GM12878 (cell line): ENCODE measurements at regions of chr5 and their contacts with region 1.

Region 1: GRCh38 chr5:162990856-162991497 is 446.4 kb upstream of the CCNG1 start:
- DNase-seq: peak; percentile 46
- ATAC-seq: peak; percentile 88
- H3K4me3 ChIP-seq: no peak overlapping the region
- H3K27ac ChIP-seq: no peak overlapping the region
- H3K4me1 ChIP-seq: no peaks in the 10 kb centered on the region
- H3K27me3 ChIP-seq: no peaks in the 10 kb centered on the region
- CTCF ChIP-seq: no peak
- EP300 ChIP-seq: peak in 1 of 2 experiments; percentile 76; a peak in 3 of 4 replicates
- POLR2A ChIP-seq: no peak
- RAD21 ChIP-seq: no peak

Region 2: DNA sequence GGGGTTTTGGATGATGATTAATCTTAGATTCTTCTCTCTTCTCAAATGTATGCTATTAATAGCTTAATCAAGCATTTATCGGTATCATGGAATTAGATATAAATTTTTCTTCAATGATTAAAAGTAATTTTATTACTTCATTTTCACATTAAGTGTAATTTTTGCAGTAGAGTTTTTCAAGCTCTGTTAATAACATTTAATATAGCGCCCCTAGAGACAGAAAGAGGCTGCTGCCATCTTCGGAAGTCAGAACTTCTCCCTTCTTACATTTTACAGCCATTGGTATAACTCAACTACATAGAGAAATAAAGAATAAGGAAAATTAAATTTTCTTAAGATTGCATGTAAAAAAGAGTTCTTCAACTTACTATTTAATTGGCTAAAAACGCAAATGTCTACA is 383.1 kb before region 1 on chr5:
- CTCF ChIA-PET with region 1: no interaction called
- POLR2A ChIA-PET with region 1: no interaction called
- RAD21 ChIA-PET with region 1: no interaction called
- SMC1A ChIA-PET with region 1: no interaction called
- in situ Hi-C with region 1: no loop called
- intact Hi-C with region 1: no loop called
- DNase-seq: no peak
- ATAC-seq: no peak
- H3K4me3 ChIP-seq: no peak overlapping the region
- H3K27ac ChIP-seq: no peak overlapping the region
- H3K4me1 ChIP-seq: no peaks in the 10 kb centered on the region
- H3K27me3 ChIP-seq: no peaks in the 10 kb centered on the region
- CTCF ChIP-seq: no peak
- EP300 ChIP-seq: no peak
- POLR2A ChIP-seq: no peak
- RAD21 ChIP-seq: no peak

Region 3: GRCh38 chr5:162824360-162824759 is 166.6 kb before region 1 on chr5:
- CTCF ChIA-PET with region 1: no interaction called
- POLR2A ChIA-PET with region 1: no interaction called
- RAD21 ChIA-PET with region 1: interaction called, 3 read pairs
- SMC1A ChIA-PET with region 1: interaction called, 3 read pairs
- in situ Hi-C with region 1: no loop called
- intact Hi-C with region 1: loop called (anchors 5 kb)
- DNase-seq: no peak
- ATAC-seq: peak; percentile 94
- H3K4me3 ChIP-seq: no peak overlapping the region
- H3K27ac ChIP-seq: no peak overlapping the region
- H3K4me1 ChIP-seq: peaks cover 3% of the 10 kb centered on the region; the same call in 1 of the 2 replicates
- H3K27me3 ChIP-seq: no peaks in the 10 kb centered on the region
- CTCF ChIP-seq: no peak
- EP300 ChIP-seq: peak; percentile 82 to 88
- POLR2A ChIP-seq: no peak
- RAD21 ChIP-seq: no peak

Region 4: DNA sequence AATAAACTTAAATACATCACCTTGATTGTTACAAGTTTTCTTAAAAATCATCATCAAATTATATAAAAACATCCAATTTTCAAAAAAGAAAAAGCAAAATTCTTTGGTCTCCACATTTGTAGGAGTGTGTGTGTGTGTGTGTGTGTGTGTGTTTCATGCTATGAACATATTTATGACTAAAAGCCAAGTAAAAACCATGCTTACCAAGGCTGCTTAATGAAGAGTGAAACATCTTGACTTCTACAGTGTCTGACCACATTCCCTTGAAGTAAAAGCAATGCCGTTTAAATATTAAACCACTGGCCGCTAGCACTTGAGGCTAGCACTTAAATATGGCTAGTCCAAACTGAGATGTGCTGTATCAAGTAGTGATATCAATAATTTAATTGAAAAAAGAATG is 102.7 kb before region 1 on chr5:
- CTCF ChIA-PET with region 1: no interaction called
- POLR2A ChIA-PET with region 1: no interaction called
- RAD21 ChIA-PET with region 1: interaction called, 5 read pairs
- SMC1A ChIA-PET with region 1: no interaction called
- in situ Hi-C with region 1: no loop called
- intact Hi-C with region 1: loop called (anchors 5 kb)
- DNase-seq: no peak
- ATAC-seq: peak; percentile 91
- H3K4me3 ChIP-seq: no peak overlapping the region
- H3K27ac ChIP-seq: no peak overlapping the region
- H3K4me1 ChIP-seq: no peaks in the 10 kb centered on the region
- H3K27me3 ChIP-seq: no peaks in the 10 kb centered on the region
- CTCF ChIP-seq: no peak
- EP300 ChIP-seq: peak; percentile 21 to 51; a peak in 2 of 4 replicates
- POLR2A ChIP-seq: no peak
- RAD21 ChIP-seq: no peak

Region 5: GRCh38 chr5:162939991-162940390 is 51.0 kb before region 1 on chr5:
- CTCF ChIA-PET with region 1: no interaction called
- POLR2A ChIA-PET with region 1: no interaction called
- RAD21 ChIA-PET with region 1: no interaction called
- SMC1A ChIA-PET with region 1: no interaction called
- in situ Hi-C with region 1: no loop called
- intact Hi-C with region 1: no loop called
- DNase-seq: no peak
- ATAC-seq: no peak
- H3K4me3 ChIP-seq: no peak overlapping the region
- H3K27ac ChIP-seq: no peak overlapping the region
- H3K4me1 ChIP-seq: no peaks in the 10 kb centered on the region
- H3K27me3 ChIP-seq: no peaks in the 10 kb centered on the region
- CTCF ChIP-seq: no peak
- EP300 ChIP-seq: no peak
- POLR2A ChIP-seq: no peak
- RAD21 ChIP-seq: no peak

Region 6: DNA sequence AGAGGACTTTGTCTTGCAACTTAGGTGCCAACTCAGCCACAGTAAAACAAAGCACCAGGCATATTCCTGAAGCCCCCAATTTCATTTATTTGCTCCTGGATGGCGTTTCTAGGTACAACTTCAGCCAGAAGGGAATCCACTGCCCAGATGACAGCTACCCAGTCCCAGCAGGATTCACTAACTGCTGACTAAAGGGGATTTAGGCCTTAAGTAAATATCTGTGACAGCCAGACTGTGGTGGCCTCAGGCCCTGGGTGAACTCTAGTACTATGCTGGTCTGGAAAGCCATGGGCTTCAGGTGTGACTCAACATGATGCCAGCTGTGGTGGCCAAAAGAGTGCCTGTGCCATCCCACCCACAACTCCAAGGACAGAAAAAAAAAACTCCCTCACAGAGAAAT is 50.3 kb after region 1 on chr5:
- CTCF ChIA-PET with region 1: no interaction called
- POLR2A ChIA-PET with region 1: no interaction called
- RAD21 ChIA-PET with region 1: no interaction called
- SMC1A ChIA-PET with region 1: no interaction called
- in situ Hi-C with region 1: no loop called
- intact Hi-C with region 1: no loop called
- DNase-seq: no peak
- ATAC-seq: no peak
- H3K4me3 ChIP-seq: no peak overlapping the region
- H3K27ac ChIP-seq: no peak overlapping the region
- H3K4me1 ChIP-seq: no peaks in the 10 kb centered on the region
- H3K27me3 ChIP-seq: no peaks in the 10 kb centered on the region
- CTCF ChIP-seq: no peak
- EP300 ChIP-seq: no peak
- POLR2A ChIP-seq: no peak
- RAD21 ChIP-seq: no peak

Region 7: GRCh38 chr5:163489055-163489744 is 498.2 kb after region 1 on chr5:
- CTCF ChIA-PET with region 1: no interaction called
- POLR2A ChIA-PET with region 1: no interaction called
- RAD21 ChIA-PET with region 1: no interaction called
- SMC1A ChIA-PET with region 1: no interaction called
- in situ Hi-C with region 1: no loop called
- intact Hi-C with region 1: no loop called
- DNase-seq: no peak
- ATAC-seq: peak; percentile 41; the same call in 2 of the 3 replicates
- H3K4me3 ChIP-seq: no peak overlapping the region
- H3K27ac ChIP-seq: no peak overlapping the region
- H3K4me1 ChIP-seq: no peaks in the 10 kb centered on the region
- H3K27me3 ChIP-seq: no peaks in the 10 kb centered on the region
- CTCF ChIP-seq: peak; percentile 7 to 21 (median 15); a peak in 2 of 6 replicates
- EP300 ChIP-seq: no peak
- POLR2A ChIP-seq: no peak
- RAD21 ChIP-seq: no peak